Astrocyte of the cerebellum (primary cell): ENCODE measurements at regions of chr11 and their contacts with region 1.

Region 1: DNA sequence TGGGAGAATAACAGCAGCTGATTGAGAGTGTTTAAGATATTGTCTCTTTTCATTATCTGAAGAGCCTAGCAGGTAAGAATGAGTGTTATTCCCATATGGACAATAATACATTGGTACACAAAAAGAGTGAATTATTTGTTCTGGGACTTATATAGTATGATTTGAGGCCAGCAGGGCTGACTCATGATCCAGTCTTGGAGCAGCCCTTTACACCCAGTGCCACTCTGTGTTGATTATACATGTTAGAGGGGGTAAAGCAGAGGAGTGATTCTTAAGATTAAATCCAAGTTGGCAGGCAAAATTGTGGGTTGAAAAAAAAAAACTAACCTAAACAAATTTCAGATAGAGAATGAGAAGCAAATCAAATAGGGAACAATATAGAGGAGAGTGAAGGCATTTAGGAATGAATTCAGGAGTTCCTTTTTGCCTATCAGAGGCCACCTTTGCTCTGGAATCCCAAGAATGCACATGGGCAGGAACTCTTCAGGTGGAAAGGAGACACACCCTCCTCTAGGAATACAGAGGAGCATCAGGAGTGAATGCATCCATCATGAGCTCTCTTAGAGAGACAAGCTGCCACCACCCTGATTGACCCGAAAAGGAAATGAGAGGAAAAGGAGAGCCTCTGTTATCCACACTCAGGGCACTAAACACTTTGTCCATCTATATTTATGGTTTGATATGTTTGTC is 19.2 kb upstream of the MRGPRX1 start:
- DNase-seq: no peak
- H3K4me3 ChIP-seq: no peak overlapping the region
- CTCF ChIP-seq: no peak

Region 2: DNA sequence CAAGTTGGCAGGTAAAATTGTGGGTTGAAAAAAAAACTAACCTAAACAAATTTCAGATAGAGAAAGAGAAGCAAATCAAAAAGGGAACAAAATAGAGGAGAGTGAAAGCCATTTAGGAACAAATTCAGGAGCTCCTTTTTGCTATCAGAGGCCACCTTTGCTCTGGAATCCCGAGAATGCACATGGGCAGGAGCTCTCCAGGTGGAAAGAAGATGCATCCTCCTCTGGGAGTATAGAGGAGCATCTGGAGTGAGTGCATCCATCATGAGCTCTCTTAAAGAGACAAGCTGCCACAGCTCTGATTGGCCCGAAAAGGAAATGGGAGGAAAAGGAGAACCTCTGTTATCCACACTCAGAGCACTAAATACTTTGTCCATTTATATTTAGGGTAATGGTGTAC is 45.5 kb before region 1 on chr11:
- in situ Hi-C with region 1: loop called (anchors 5 kb)
- DNase-seq: no peak
- H3K4me3 ChIP-seq: no peak overlapping the region
- CTCF ChIP-seq: no peak

Region 3: DNA sequence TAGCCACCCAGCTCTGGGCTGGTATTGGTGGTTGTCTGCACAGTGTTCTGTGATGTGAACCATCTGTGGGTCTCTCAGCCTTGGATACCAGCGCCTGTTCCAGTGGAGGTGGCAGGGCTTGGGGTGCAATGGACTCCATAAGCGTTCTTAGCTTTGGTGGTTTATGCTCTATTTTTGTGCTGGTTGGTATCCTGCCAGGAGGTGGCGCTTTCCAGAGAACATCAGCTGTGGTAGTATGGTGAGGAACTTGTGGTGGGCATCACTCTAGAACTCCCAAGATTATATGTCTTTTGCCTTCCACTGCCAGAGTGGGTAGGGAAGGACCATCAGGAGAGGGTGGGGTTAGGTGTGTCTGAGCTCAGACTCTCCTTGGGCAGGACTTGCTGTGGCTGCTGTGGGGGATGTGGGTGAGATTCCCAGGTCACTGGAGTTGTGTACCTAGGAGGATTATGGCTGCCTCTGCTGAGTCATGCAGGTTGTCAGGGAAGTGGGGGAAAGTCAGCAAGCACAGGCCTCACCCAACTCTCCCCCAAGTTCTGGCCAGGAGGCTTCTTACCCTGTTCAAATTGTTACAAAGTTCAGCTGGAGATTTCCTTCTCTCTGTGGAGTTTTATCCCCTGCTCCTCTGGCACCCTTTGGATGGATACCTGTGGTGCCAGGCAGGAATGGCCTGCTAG is 55.0 kb after region 1 on chr11:
- in situ Hi-C with region 1: no loop called
- DNase-seq: no peak
- H3K4me3 ChIP-seq: no peak overlapping the region
- CTCF ChIP-seq: no peak